Activated B cell treated with CpG ODN at 0.5 μM for 24 hours (primary cell): ENCODE measurements at regions of chr7 and their contacts with region 1.

Region 1: DNA sequence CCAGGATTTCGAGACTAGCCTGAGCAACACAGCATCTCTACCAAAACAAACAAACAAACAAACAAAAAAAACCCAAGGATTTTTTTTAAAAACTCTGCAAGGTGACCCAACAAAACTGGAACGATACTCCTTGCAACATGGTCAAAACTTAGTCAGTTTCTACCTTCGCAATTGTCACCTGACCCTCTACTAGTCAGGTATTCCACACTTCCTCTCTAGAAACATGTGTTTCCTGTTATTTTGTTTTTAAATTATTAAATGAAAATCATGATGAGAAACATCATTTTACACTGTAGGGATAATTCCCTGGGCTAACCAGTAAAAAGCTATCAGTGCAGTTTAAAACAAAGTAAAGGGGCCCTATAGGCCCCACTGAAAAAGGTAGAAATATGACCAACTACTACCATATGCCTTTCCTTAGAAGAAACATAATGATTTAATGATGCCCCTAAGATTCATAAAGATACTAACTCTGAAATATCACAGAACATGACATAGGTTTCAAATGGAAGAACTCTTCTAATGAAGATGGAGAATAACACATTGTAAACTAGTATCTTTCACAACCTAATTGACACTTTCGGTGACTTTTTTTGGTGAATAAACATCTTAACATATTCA is 8.7 kb downstream of the BRAF start:
- DNase-seq: no peak
- ATAC-seq: no peak
- H3K4me3 Mint-ChIP-seq: no peak overlapping the region
- H3K27ac Mint-ChIP-seq: no peak overlapping the region
- H3K4me1 Mint-ChIP-seq: peaks cover 72% of the 10 kb centered on the region
- H3K27me3 Mint-ChIP-seq: no peaks in the 10 kb centered on the region
- CTCF ChIP-seq: no peak

Region 2: DNA sequence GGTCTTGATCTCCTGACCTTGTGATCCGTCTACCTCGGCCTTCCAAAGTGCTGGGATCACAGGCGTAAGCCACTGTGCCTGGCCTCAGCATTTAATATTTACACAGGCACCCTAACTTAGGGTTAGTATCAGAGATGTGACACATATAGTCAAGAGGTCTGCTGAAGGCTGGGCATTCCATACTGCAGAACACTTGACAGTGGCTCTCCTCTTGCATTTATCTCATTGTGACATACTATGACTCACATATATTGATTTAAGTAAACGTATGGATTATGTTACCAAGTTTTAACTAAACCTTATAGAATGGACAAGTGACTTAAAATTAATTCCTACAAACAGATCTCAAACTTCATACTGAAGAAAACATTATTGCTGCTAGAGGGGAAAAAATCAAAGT is 28.0 kb before region 1 on chr7:
- CTCF ChIA-PET with region 1: no interaction called
- POLR2A ChIA-PET with region 1: no interaction called
- intact Hi-C with region 1: no loop called
- DNase-seq: no peak
- ATAC-seq: no peak
- H3K4me3 Mint-ChIP-seq: no peak overlapping the region
- H3K27ac Mint-ChIP-seq: no peak overlapping the region
- H3K4me1 Mint-ChIP-seq: peaks cover 73% of the 10 kb centered on the region
- H3K27me3 Mint-ChIP-seq: no peaks in the 10 kb centered on the region
- CTCF ChIP-seq: no peak

Region 3: GRCh38 chr7:140902303-140902953 is 13.6 kb before region 1 on chr7:
- CTCF ChIA-PET with region 1: interaction called, 3 read pairs
- POLR2A ChIA-PET with region 1: no interaction called
- intact Hi-C with region 1: loop called (anchors 2 kb)
- DNase-seq: no peak
- ATAC-seq: peak; percentile 40
- H3K4me3 Mint-ChIP-seq: peak overlapping the region; percentile 56
- H3K27ac Mint-ChIP-seq: peak overlapping the region; percentile 82
- H3K4me1 Mint-ChIP-seq: peaks cover 76% of the 10 kb centered on the region
- H3K27me3 Mint-ChIP-seq: no peaks in the 10 kb centered on the region
- CTCF ChIP-seq: no peak

Region 4: GRCh38 chr7:142298009-142298408 is 1382.0 kb after region 1 on chr7:
- CTCF ChIA-PET with region 1: no interaction called
- POLR2A ChIA-PET with region 1: no interaction called
- intact Hi-C with region 1: no loop called
- DNase-seq: no peak
- ATAC-seq: no peak
- H3K4me3 Mint-ChIP-seq: no peak overlapping the region
- H3K27ac Mint-ChIP-seq: no peak overlapping the region
- H3K4me1 Mint-ChIP-seq: no peaks in the 10 kb centered on the region
- H3K27me3 Mint-ChIP-seq: peaks cover 2% of the 10 kb centered on the region
- CTCF ChIP-seq: no peak